Mammary epithelial cell (primary cell): ENCODE measurements at regions of chr7 and their contacts with region 1.

Region 1: GRCh38 chr7:150962553-150963399 is 15.3 kb downstream of the KCNH2 start:
- DNase-seq: no peak
- H3K4me3 ChIP-seq: no peak overlapping the region
- H3K27ac ChIP-seq: no peak overlapping the region
- H3K4me1 ChIP-seq: peaks cover 6% of the 10 kb centered on the region
- H3K27me3 ChIP-seq: peaks cover 3% of the 10 kb centered on the region
- CTCF ChIP-seq: peak; percentile 90 to 93

Region 2: GRCh38 chr7:151017953-151018420 is 55.2 kb after region 1 on chr7:
- CTCF ChIA-PET with region 1: no interaction called
- dilution Hi-C with region 1: no loop called
- in situ Hi-C with region 1: no loop called
- intact Hi-C with region 1: loop called (anchors 2 kb)
- DNase-seq: peak; percentile 25
- H3K4me3 ChIP-seq: peak overlapping the region in 1 of 3 experiments; percentile 38
- H3K27ac ChIP-seq: no peak overlapping the region
- H3K4me1 ChIP-seq: peaks cover 28% of the 10 kb centered on the region
- H3K27me3 ChIP-seq: peaks cover 4% of the 10 kb centered on the region
- CTCF ChIP-seq: peak; percentile 75 to 93